Breast epithelium (tissue), 4 donors: ENCODE measurements at regions of chr1 and their contacts with region 1.

Region 1: DNA sequence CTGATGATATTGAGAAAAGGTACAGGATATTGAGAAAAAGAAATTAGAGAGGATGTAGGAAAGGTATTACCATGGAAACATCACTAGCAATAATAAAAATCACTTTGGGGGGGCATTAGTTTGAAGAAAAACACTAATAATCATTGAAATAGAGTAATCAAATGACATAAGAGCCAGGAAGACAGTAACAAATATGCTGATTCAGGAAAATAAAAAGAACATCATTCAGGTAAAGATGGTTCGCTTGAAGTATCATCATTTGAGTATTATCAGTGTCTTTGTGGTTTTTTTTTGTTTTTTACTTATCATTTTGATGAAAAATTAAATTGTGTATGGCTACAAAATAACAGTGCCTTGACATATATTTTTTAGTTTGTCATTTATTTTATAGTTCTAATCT is 164.5 kb downstream of the IFI44 start:
- DNase-seq: no peak
- H3K4me3 ChIP-seq: no peak overlapping the region
- H3K27ac ChIP-seq: no peak overlapping the region
- H3K4me1 ChIP-seq: no peaks in the 10 kb centered on the region
- H3K27me3 ChIP-seq: no peaks in the 10 kb centered on the region
- CTCF ChIP-seq: no peak
- POLR2A ChIP-seq: no peak

Region 2: DNA sequence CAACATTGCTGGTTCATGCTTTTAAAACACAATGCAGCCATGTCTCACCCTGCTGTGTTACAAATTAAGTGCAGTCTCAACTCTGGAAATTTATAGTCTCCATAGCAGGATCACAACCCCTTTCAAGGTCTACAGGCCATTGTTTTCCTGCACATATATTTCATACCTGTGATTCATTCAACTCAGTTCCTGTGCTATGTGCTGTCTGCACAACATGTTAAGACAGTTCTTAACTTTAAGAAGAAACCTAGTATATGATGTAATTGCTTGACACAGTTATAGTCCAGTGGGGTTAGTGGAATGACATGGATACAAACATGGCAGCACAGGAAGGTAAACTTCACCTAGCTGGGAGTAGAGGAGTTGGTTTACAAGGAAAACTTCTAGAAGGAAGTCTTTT is 58.2 kb before region 1 on chr1:
- intact Hi-C with region 1: no loop called
- DNase-seq: no peak
- H3K4me3 ChIP-seq: no peak overlapping the region
- H3K27ac ChIP-seq: no peak overlapping the region
- H3K4me1 ChIP-seq: no peaks in the 10 kb centered on the region
- H3K27me3 ChIP-seq: no peaks in the 10 kb centered on the region
- CTCF ChIP-seq: no peak
- POLR2A ChIP-seq: no peak

Region 3: DNA sequence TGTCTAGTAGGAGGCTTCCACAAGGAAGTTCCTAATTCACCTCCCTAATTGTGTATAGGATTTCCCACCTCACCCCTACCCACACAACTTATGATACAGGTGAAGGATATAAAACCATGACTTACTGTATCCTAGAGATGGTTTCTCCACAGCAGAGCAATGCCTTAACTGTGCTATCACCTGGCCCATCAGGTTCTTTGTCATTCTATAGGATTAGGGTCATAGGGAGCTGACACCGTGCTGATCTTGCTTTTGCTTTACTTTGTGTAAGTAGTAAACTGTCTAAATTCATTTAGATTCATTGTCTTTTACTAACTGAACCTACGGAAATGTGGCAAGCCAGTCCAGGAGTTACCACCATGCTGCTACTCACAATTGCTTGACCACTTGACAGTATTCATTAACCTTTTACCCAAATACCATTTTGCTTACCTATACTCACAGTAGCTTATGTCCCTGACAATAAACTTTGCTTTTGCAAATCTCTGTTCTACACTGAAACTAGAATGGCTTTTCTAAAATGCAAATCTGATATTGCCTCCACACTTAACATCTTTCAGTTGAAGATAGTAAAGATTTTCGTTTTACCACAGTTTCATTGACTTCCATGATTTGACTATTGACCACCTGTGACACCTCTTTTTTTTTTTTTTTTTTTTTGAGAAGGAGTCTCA is 16.9 kb before region 1 on chr1:
- intact Hi-C with region 1: loop called (anchors 1 kb)
- DNase-seq: no peak
- H3K4me3 ChIP-seq: no peak overlapping the region
- H3K27ac ChIP-seq: no peak overlapping the region
- H3K4me1 ChIP-seq: no peaks in the 10 kb centered on the region
- H3K27me3 ChIP-seq: no peaks in the 10 kb centered on the region
- CTCF ChIP-seq: no peak
- POLR2A ChIP-seq: no peak